ENCODE measurements at regions of chr4 and their contacts with region 1.

Region 1: GRCh38 chr4:138680989-138681604 is 334.5 kb upstream of the NOCT start:
- DNase-seq: peak; percentile 49
- H3K4me3 ChIP-seq: no peak overlapping the region
- H3K27ac ChIP-seq: no peak overlapping the region
- H3K4me1 ChIP-seq: no peaks in the 10 kb centered on the region
- H3K27me3 ChIP-seq: no peaks in the 10 kb centered on the region
- CTCF ChIP-seq: peak; percentile 81 to 83

Region 2: DNA sequence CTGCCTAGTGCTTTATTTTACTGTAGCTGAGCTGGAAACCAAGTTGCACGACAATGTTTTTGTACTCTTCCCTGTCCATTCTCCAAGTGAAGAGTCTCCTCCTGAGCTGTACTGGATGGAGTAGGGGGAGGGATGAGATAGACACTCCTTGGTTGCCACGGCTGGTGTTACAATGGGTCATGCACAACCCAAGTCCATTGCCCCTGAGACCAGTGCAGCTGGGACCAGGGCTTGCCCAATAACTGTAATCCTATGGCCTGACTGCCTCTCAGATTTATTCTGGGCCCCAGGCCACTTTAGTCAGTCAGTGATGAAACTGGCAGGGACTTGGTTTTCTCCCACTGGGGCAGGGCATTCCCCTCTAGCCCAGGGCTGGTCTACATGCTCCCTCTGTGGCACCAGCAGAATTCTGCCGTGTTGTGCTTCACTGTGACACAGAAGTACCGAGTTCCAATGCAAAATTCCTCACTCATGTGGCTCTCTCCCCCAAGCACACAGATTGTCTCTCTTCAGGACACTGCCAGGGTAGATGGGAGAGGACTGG is 945.5 kb before region 1 on chr4:
- CTCF ChIA-PET with region 1: no interaction called
- dilution Hi-C with region 1: no loop called
- in situ Hi-C with region 1: no loop called
- intact Hi-C with region 1: loop called (anchors 2 kb)
- DNase-seq: no peak
- H3K4me3 ChIP-seq: no peak overlapping the region
- H3K27ac ChIP-seq: no peak overlapping the region
- H3K4me1 ChIP-seq: no peaks in the 10 kb centered on the region
- H3K27me3 ChIP-seq: no peaks in the 10 kb centered on the region
- CTCF ChIP-seq: no peak

Region 3: GRCh38 chr4:138919094-138919936 is 238.2 kb after region 1 on chr4:
- CTCF ChIA-PET with region 1: no interaction called
- dilution Hi-C with region 1: no loop called
- in situ Hi-C with region 1: no loop called
- intact Hi-C with region 1: loop called (anchors 1 kb)
- DNase-seq: peak; percentile 74
- H3K4me3 ChIP-seq: no peak overlapping the region
- H3K27ac ChIP-seq: no peak overlapping the region
- H3K4me1 ChIP-seq: no peaks in the 10 kb centered on the region
- H3K27me3 ChIP-seq: no peaks in the 10 kb centered on the region
- CTCF ChIP-seq: peak; percentile 87 to 92

Region 4: GRCh38 chr4:138938366-138938690 is 257.2 kb after region 1 on chr4:
- CTCF ChIA-PET with region 1: no interaction called
- dilution Hi-C with region 1: no loop called
- in situ Hi-C with region 1: no loop called
- intact Hi-C with region 1: loop called (anchors 5 kb)
- DNase-seq: peak; percentile 48
- H3K4me3 ChIP-seq: no peak overlapping the region
- H3K27ac ChIP-seq: no peak overlapping the region
- H3K4me1 ChIP-seq: peaks cover 8% of the 10 kb centered on the region
- H3K27me3 ChIP-seq: no peaks in the 10 kb centered on the region
- CTCF ChIP-seq: peak; percentile 35 to 60